ENCODE measurements at regions of chr10 and their contacts with region 1.

Region 1: DNA sequence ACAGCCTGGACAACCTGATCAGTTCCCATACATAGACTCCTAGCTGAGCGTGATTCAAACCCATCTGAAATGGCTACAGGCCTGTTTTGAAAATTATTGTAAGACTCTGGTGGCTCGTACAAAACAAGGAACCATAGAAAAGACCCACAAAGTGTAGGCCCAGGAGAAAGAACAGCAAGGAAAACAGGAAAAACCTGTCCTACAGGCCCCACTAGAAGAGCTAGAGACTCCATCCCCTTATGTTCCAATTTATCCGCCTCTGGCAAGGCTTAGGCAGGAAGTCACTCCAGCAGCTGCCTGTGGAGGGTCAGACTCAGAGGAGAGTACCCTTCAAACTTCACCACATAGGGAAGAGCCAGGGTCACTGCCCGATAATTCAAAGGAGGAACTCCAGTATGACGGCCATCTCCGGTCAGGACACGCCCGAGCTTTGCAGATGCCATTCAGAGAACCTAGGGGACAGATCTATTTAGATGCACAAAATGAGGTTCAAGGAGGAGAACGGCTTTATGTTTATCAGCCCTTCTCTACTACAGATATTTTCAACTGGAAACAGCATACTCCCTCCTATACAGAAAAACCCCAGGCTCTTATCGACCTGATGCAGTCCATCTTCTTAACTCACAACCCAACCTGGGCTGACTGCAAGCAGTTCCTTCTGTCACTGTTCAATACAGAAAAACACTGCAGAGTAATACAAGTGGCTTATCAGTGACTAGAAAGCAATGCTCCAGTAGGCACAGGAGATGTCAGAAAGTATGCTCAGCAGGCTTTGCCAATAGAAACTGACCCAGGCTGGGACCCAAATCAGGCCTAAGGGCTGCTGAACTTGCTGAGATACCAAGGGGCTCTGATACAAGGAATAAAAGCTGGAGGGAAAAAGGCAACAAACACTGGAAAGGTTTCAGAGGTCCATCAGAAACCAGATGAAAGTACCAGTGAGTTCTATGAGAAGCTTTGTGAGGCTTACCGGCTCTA is 8.6 kb upstream of the ZNF33B start:
- DNase-seq: peak; percentile 75 to 93 (median 82)
- ATAC-seq: peak; percentile 76
- H3K4me3 ChIP-seq: no peak overlapping the region
- H3K27ac ChIP-seq: peak overlapping the region; percentile 90
- H3K4me1 ChIP-seq: peaks cover 29 to 51% of the 10 kb centered on the region in 2 experiments
- H3K27me3 ChIP-seq: no peaks in the 10 kb centered on the region
- CTCF ChIP-seq: no peak
- EP300 ChIP-seq: peak; percentile 90; the same call in 1 of the 2 replicates
- POLR2A ChIP-seq: no peak
- RAD21 ChIP-seq: no peak

Region 2: DNA sequence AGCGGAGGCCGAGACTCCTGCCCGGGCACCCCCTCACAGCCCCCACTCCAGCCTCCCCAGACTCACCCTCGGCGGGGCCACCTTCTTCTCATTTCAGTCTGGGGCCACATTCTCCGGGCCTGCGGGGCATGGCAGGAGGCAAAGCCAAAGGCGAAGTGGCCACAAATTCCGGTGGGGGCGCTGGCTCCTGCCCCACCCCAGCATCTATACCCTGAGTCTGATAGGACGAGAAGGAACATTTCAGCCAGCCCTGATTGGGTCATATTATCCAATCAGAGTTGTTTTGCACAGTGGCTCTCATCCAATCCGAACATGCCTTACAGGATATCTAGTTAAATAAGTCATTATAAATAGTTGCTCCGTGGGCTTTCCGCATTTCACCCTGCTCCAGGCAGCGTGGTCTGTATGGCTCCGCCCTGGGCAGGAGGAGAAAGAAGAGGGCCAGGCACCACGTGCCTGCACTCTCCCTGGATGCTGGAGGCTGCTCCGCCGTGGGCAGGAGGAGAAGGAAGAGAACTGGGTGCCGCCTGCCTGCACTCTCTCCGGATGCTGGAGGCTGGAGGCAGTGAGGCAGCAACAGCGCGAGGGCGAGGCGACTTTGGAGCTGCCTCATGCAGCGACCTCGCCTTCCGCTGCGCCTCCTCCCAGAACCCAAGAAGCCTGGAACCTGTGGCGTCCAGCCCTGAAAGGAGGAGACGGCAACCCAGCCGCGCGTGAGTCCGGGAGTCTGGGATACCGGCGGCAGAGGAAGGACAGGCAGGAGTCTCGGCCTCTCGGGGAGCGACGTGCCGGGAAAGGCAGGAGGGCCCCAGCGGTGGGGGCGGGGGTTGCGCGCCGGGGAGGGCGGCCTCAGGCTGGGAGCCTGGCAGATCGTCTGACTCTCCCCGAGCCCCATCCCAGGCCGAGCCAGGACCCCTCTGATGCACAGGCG is 171.5 kb before region 1 on chr10:
- CTCF ChIA-PET with region 1: no interaction called
- POLR2A ChIA-PET with region 1: no interaction called
- in situ Hi-C with region 1: no loop called
- intact Hi-C with region 1: loop called (anchors 10 kb)
- DNase-seq: peak; percentile 36 to 58 (median 51)
- ATAC-seq: peak; percentile 87
- H3K4me3 ChIP-seq: peak overlapping the region; percentile 37
- H3K27ac ChIP-seq: no peak overlapping the region; the same call in 2 of the 3 replicates
- H3K4me1 ChIP-seq: peaks cover 0 to 17% of the 10 kb centered on the region in 2 experiments; a peak in 2 of 5 replicates
- H3K27me3 ChIP-seq: peaks cover 3 to 16% of the 10 kb centered on the region in 2 experiments; a peak in 3 of 5 replicates
- CTCF ChIP-seq: no peak; a peak in 1 of 6 replicates
- EP300 ChIP-seq: no peak
- POLR2A ChIP-seq: no peak
- RAD21 ChIP-seq: no peak

Region 3: GRCh38 chr10:42680267-42680666 is 33.3 kb after region 1 on chr10:
- CTCF ChIA-PET with region 1: no interaction called
- POLR2A ChIA-PET with region 1: interaction called, 3 read pairs
- in situ Hi-C with region 1: no loop called
- intact Hi-C with region 1: loop called (anchors 5 kb)
- DNase-seq: peak in 1 of 4 experiments; percentile 38
- ATAC-seq: peak; percentile 62
- H3K4me3 ChIP-seq: no peak overlapping the region
- H3K27ac ChIP-seq: no peak overlapping the region
- H3K4me1 ChIP-seq: peaks cover 0 to 3% of the 10 kb centered on the region in 2 experiments; a peak in 1 of 5 replicates
- H3K27me3 ChIP-seq: no peaks in the 10 kb centered on the region
- CTCF ChIP-seq: no peak
- EP300 ChIP-seq: no peak
- POLR2A ChIP-seq: no peak
- RAD21 ChIP-seq: no peak

Region 4: DNA sequence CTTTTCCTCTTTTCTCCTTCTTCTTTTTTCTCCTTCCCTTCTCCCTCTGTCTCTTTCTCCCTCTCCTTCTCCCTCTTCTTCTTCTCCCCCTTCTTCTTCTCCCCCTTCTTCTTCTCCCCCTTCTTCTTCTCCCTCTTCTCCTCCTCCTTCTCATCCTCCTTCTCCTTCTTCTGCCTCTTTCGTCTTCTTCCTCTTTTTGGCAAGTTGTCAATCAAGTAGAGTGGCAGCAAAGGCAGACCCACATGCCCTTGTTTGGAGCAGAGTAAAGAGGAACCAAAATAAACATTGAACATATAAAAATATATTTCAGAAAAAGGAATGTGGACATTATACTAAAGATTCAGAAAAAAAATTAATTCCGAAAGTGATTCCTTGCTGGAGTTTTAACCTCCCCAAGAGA is 51.0 kb after region 1 on chr10:
- CTCF ChIA-PET with region 1: no interaction called
- POLR2A ChIA-PET with region 1: no interaction called
- in situ Hi-C with region 1: no loop called
- intact Hi-C with region 1: loop called (anchors 5 kb)
- DNase-seq: no peak
- ATAC-seq: no peak
- H3K4me3 ChIP-seq: no peak overlapping the region
- H3K27ac ChIP-seq: no peak overlapping the region
- H3K4me1 ChIP-seq: no peaks in the 10 kb centered on the region; a peak in 1 of 5 replicates
- H3K27me3 ChIP-seq: no peaks in the 10 kb centered on the region; a peak in 1 of 5 replicates
- CTCF ChIP-seq: no peak
- EP300 ChIP-seq: no peak
- POLR2A ChIP-seq: no peak
- RAD21 ChIP-seq: no peak

Region 5: DNA sequence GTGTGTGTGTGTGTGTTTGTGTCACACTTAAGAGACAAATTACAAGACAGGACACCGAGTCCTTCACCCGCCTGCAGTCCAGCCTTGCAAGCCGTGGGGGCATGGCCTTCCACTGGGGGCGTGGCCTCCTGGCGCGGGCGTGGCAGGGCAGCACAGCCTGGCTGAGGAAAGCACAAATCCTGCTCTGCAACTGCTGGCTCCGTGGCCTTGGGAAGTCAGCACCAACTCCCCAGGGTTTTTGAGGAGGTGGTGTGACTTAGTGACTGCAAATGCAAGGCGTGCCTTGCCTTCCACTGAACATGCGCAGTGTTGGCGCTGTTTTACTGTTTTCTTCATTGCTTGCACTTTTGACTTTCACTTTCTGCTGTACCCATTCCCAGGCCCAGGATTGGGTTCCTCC is 122.7 kb after region 1 on chr10:
- CTCF ChIA-PET with region 1: no interaction called
- POLR2A ChIA-PET with region 1: no interaction called
- in situ Hi-C with region 1: no loop called
- intact Hi-C with region 1: loop called (anchors 10 kb)
- DNase-seq: peak; percentile 49 to 71 (median 67)
- ATAC-seq: peak; percentile 93
- H3K4me3 ChIP-seq: no peak overlapping the region
- H3K27ac ChIP-seq: no peak overlapping the region
- H3K4me1 ChIP-seq: peaks cover 8 to 24% of the 10 kb centered on the region in 2 experiments; a peak in 4 of 5 replicates
- H3K27me3 ChIP-seq: peaks cover 8 to 21% of the 10 kb centered on the region in 2 experiments; a peak in 3 of 5 replicates
- CTCF ChIP-seq: no peak
- EP300 ChIP-seq: no peak
- POLR2A ChIP-seq: no peak
- RAD21 ChIP-seq: no peak

Region 6: GRCh38 chr10:43407576-43408330 is 760.8 kb after region 1 on chr10:
- CTCF ChIA-PET with region 1: no interaction called
- POLR2A ChIA-PET with region 1: no interaction called
- in situ Hi-C with region 1: no loop called
- intact Hi-C with region 1: loop called (anchors 10 kb)
- DNase-seq: peak; percentile 70 to 97 (median 82)
- ATAC-seq: peak; percentile 69
- H3K4me3 ChIP-seq: peak overlapping the region; percentile 82
- H3K27ac ChIP-seq: peak overlapping the region; percentile 91
- H3K4me1 ChIP-seq: peaks cover 22 to 50% of the 10 kb centered on the region in 2 experiments; a peak in 4 of 5 replicates
- H3K27me3 ChIP-seq: no peaks in the 10 kb centered on the region
- CTCF ChIP-seq: peak; percentile 49 to 69 (median 52)
- EP300 ChIP-seq: peak; percentile 73
- POLR2A ChIP-seq: peak; percentile 99
- RAD21 ChIP-seq: peak in 1 of 2 experiments; percentile 63; a peak in 3 of 4 replicates